ENCODE measurements at regions of chr1 and their contacts with region 1.

Region 1: DNA sequence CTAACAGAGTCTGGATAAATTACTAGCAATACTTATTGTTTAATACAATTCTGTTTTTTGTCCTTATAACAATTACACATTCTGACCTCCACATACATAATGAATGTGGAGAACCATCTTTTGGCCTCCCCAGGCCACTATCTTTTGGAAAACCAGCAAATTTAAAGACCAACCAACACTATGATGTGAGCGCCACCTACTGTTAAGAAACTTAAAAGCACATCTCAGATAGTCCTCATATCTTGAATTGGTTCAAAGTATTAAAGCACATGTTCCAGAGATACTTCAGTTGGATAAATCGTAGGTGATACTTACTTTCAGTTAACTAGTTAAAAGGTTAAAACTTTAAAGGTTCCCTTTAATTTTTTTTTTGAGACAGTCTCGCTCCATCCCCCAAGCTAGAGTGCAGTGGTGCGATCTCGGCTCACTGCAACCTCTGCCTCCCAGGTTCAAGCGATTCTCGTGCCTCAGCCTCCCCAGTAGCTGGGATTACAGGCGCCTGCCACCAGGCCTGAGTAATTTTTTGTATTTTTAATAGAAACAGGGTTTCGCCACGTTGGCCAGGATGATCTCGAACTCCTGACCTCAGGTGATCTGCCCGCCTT is 29.3 kb upstream of the USP1 start:
- DNase-seq: peak in 4 of 5 donors; percentile 37 to 47 (median 42)
- H3K4me3 ChIP-seq: no peak overlapping the region
- H3K4me3 Mint-ChIP-seq: no peak overlapping the region
- H3K27ac ChIP-seq: no peak overlapping the region
- H3K27ac Mint-ChIP-seq: peak overlapping the region in 1 of 7 donors; percentile 41
- H3K4me1 ChIP-seq: no peaks in the 10 kb centered on the region
- H3K4me1 Mint-ChIP-seq: no peaks in the 10 kb centered on the region
- H3K27me3 ChIP-seq: no peaks in the 10 kb centered on the region
- H3K27me3 Mint-ChIP-seq: no peaks in the 10 kb centered on the region

Region 2: GRCh38 chr1:62175568-62176179 is 231.8 kb before region 1 on chr1:
- CTCF ChIA-PET with region 1: interaction called, 74 read pairs
- POLR2A ChIA-PET with region 1: interaction called, 5 read pairs
- intact Hi-C with region 1: no loop called
- DNase-seq: peak in 4 of 5 donors; percentile 26 to 51 (median 34)
- H3K4me3 ChIP-seq: no peak overlapping the region
- H3K4me3 Mint-ChIP-seq: no peak overlapping the region
- H3K27ac ChIP-seq: no peak overlapping the region
- H3K27ac Mint-ChIP-seq: no peak overlapping the region
- H3K4me1 ChIP-seq: no peaks in the 10 kb centered on the region
- H3K4me1 Mint-ChIP-seq: no peaks in the 10 kb centered on the region
- H3K27me3 ChIP-seq: no peaks in the 10 kb centered on the region
- H3K27me3 Mint-ChIP-seq: peaks cover 5 to 8% of the 10 kb centered on the region in 2 donors

Region 3: GRCh38 chr1:62271948-62272728 is 135.4 kb before region 1 on chr1:
- CTCF ChIA-PET with region 1: no interaction called
- POLR2A ChIA-PET with region 1: no interaction called
- intact Hi-C with region 1: loop called (anchors 5 kb)
- DNase-seq: peak; percentile 47 to 69 (median 62)
- H3K4me3 ChIP-seq: peak overlapping the region; percentile 2 to 6
- H3K4me3 Mint-ChIP-seq: peak overlapping the region in 7 of 8 donors; percentile 44 to 73 (median 63)
- H3K27ac ChIP-seq: peak overlapping the region; percentile 6
- H3K27ac Mint-ChIP-seq: peak overlapping the region; percentile 17 to 95 (median 90)
- H3K4me1 ChIP-seq: peaks cover 20% of the 10 kb centered on the region
- H3K4me1 Mint-ChIP-seq: peaks cover 16 to 36% (median 23%) of the 10 kb centered on the region in 4 donors
- H3K27me3 ChIP-seq: no peaks in the 10 kb centered on the region
- H3K27me3 Mint-ChIP-seq: peaks cover 0 to 3% of the 10 kb centered on the region in 2 donors

Region 4: DNA sequence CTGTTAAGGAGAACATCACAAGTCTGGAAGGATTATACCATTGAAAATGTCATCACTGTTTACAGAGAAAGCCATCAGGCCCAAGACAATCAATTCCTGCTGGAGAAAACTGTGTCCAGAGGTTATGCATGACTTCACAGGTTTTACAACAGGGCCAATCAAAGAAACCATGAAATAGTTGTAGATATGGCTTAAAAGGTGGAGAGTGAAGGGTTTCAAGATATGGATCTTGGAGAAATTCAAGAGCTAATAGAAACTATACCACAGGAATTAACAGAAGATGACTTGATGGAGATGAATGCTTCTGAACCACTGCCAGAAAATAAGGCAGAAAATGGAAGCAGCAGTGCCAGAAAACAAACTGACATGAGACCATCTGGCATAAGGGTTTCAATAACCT is 59.6 kb after region 1 on chr1:
- CTCF ChIA-PET with region 1: no interaction called
- POLR2A ChIA-PET with region 1: no interaction called
- intact Hi-C with region 1: no loop called
- DNase-seq: no peak
- H3K4me3 ChIP-seq: no peak overlapping the region
- H3K4me3 Mint-ChIP-seq: no peak overlapping the region
- H3K27ac ChIP-seq: no peak overlapping the region
- H3K27ac Mint-ChIP-seq: no peak overlapping the region
- H3K4me1 ChIP-seq: no peaks in the 10 kb centered on the region
- H3K4me1 Mint-ChIP-seq: no peaks in the 10 kb centered on the region
- H3K27me3 ChIP-seq: no peaks in the 10 kb centered on the region
- H3K27me3 Mint-ChIP-seq: no peaks in the 10 kb centered on the region

Measured in CD4-positive, alpha-beta memory T cell (primary cell).